ENCODE measurements at regions of chr1 and their contacts with region 1.

Region 1: GRCh38 chr1:244864253-244865027 is at the start of gene HNRNPU:
- DNase-seq: peak; percentile 97
- H3K4me3 Mint-ChIP-seq: peak within 1 kb of the TSS; percentile 99
- H3K27ac Mint-ChIP-seq: peak within 1 kb of the TSS; percentile 97
- H3K4me1 Mint-ChIP-seq: peaks cover 38% of the 10 kb centered on the region
- H3K27me3 Mint-ChIP-seq: no peaks in the 10 kb centered on the region
- total RNA-seq, gene HNRNPU: 410 to 421 TPM

Region 2: GRCh38 chr1:244652699-244653466 is 211.6 kb before region 1 on chr1 and contains the start of gene DESI2:
- CTCF ChIA-PET with region 1: no interaction called
- POLR2A ChIA-PET with region 1: no interaction called
- intact Hi-C with region 1: loop called (anchors 1 kb)
- DNase-seq: peak; percentile 98
- H3K4me3 Mint-ChIP-seq: peak within 1 kb of the TSS; percentile 79
- H3K27ac Mint-ChIP-seq: peak within 1 kb of the TSS; percentile 79
- H3K4me1 Mint-ChIP-seq: peaks cover 22% of the 10 kb centered on the region
- H3K27me3 Mint-ChIP-seq: no peaks in the 10 kb centered on the region
- total RNA-seq, gene DESI2: 24.8 to 25.6 TPM

Region 3: GRCh38 chr1:244843148-244843978 is 21.1 kb before region 1 on chr1:
- CTCF ChIA-PET with region 1: interaction called, 5 read pairs
- POLR2A ChIA-PET with region 1: interaction called, 219 read pairs
- intact Hi-C with region 1: no loop called
- DNase-seq: no peak
- H3K4me3 Mint-ChIP-seq: no peak overlapping the region
- H3K27ac Mint-ChIP-seq: peak overlapping the region; percentile 18
- H3K4me1 Mint-ChIP-seq: peaks cover 68% of the 10 kb centered on the region
- H3K27me3 Mint-ChIP-seq: no peaks in the 10 kb centered on the region

Region 4: GRCh38 chr1:244918421-244919319 is 54.2 kb after region 1 on chr1:
- CTCF ChIA-PET with region 1: no interaction called
- POLR2A ChIA-PET with region 1: interaction called, 3 read pairs
- intact Hi-C with region 1: loop called (anchors 2 kb)
- DNase-seq: peak; percentile 62
- H3K4me3 Mint-ChIP-seq: peak overlapping the region; percentile 73
- H3K27ac Mint-ChIP-seq: no peak overlapping the region
- H3K4me1 Mint-ChIP-seq: peaks cover 12% of the 10 kb centered on the region
- H3K27me3 Mint-ChIP-seq: no peaks in the 10 kb centered on the region

Measured in activated CD4-positive, alpha-beta memory T cell treated with anti-CD3 and anti-CD28 coated beads for 36 hours (primary cell).